A549 (cell line): ENCODE measurements at regions of chr2 and their contacts with region 1.

Region 1: DNA sequence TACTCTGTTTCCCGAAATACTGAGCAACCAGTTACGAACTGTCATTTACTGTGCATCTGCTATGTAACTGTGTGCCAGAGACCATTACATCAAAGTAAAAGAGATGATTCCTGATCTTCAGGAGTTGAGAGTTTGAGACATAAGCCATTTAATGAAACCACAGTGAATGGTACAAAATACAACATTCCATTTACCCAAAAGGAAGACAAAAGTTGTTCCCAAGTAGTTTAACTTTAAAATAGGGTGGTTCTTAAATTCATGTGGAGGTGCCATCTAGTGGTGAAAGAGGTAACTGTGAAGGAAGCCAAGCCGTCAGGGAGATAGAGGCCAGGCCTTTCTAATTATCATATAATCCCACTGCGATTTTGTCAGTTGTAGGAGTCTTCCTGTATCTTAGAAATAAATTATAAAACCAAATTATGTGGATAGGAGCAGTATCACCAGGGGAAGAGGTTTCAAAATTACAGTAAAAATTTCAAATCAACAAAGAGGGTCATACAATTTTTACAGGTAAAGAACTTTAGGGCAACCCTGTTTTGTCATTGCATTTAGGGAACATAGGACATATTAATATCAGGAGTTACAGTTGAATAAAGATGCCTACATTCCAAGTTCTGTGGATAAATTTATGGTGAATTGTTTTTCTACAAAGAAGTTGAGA is 67.7 kb downstream of the EPAS1 start:
- DNase-seq: peak; percentile 50 to 71
- ATAC-seq: peak in 1 of 2 experiments; percentile 70; a peak in 3 of 6 replicates
- H3K4me3 ChIP-seq: no peak overlapping the region
- H3K27ac ChIP-seq: peak overlapping the region in 1 of 2 experiments; percentile 60; a peak in 2 of 6 replicates
- H3K4me1 ChIP-seq: peaks cover 27% of the 10 kb centered on the region
- CTCF ChIP-seq: peak; percentile 94
- EP300 ChIP-seq: no peak
- POLR2A ChIP-seq: no peak
- RAD21 ChIP-seq: peak; percentile 94 to 96

Region 2: DNA sequence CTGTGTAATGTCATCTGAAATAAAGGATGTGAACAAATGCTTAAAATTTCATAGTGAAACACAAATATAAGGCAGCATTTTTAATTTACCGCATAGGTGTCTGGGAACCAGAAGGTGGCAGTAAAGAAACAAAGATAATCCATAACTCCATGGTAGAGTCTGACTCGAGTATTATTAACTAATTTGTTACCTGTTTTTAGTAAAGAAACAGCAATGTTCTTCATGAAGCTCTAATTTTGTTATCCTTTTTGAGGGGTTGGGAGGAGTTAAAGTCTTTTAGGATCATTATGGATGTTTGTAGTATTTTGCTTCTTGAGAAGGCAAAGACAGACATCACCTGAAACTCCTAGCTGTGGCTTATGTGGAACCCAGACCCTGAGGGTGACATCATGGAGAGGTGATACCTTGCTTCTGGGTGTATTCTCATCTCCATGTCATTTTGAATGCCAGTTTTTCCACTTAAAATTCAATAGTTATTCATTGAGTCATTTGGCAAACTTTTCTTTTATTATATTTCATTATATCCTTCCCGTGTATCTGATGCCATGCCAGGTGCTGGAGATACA is 353.9 kb before region 1 on chr2:
- CTCF ChIA-PET with region 1: interaction called, 29 read pairs
- POLR2A ChIA-PET with region 1: no interaction called
- DNase-seq: peak; percentile 62 to 72
- ATAC-seq: peak; percentile 73 to 92; a peak in 5 of 6 replicates
- H3K4me3 ChIP-seq: no peak overlapping the region
- H3K27ac ChIP-seq: peak overlapping the region; percentile 12 to 56; a peak in 4 of 6 replicates
- H3K4me1 ChIP-seq: peaks cover 19% of the 10 kb centered on the region
- CTCF ChIP-seq: peak; percentile 96
- EP300 ChIP-seq: no peak
- POLR2A ChIP-seq: no peak
- RAD21 ChIP-seq: peak; percentile 94 to 98

Region 3: GRCh38 chr2:46306330-46306751 is 58.6 kb before region 1 on chr2:
- CTCF ChIA-PET with region 1: interaction called, 14 read pairs
- POLR2A ChIA-PET with region 1: no interaction called
- DNase-seq: peak in 1 of 2 experiments; percentile 83
- ATAC-seq: peak; percentile 27 to 38; a peak in 4 of 6 replicates
- H3K4me3 ChIP-seq: no peak overlapping the region
- H3K27ac ChIP-seq: peak overlapping the region; percentile 71 to 92
- H3K4me1 ChIP-seq: peaks cover 100% of the 10 kb centered on the region
- CTCF ChIP-seq: no peak
- EP300 ChIP-seq: peak; percentile 84 to 89; a peak in 3 of 5 replicates
- POLR2A ChIP-seq: no peak
- RAD21 ChIP-seq: peak in 1 of 2 experiments; percentile 32; a peak in 1 of 5 replicates

Region 4: DNA sequence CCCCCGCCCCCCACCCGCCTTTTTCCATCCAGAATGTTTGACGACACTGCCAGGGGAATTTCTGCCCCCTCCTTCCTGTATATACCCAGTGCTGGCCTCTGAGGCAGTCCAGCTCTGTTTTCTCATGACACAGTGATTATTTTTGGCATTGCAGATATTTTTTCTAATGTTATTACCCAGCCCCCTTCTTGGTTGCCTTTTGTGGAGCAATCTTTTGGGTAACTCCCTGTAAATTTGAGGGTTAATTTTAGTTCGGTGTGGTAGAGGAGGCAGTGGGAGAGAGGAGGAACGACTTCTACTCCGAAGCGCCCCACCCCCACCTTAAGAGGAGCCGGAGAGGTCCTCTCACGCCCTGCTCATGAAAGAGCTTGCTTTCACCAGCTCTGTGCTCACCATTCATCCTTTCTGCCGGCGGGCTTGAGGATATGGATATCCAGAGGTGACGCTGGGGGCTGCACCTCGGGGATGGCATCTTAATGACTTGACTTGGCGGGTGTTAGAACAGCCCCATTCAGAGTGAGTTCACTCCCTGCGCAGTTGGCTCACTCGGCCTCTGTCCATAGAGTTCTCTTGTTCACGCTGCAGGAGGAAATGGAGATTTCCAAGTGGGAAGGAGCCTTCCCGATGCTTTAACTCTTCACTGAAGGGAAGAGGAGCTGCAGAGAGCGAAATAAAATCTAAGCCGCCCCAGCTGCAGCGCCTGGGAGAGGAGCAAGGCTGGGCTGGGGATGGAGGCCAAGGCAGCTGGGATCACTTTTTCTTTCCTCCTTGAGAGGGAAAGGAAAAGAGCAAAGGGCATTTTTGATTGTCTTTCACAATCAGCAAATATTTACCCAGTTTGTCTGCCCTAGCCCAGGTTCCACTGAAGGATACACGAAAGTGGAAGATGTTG is 29.3 kb before region 1 on chr2:
- CTCF ChIA-PET with region 1: interaction called, 17 read pairs
- POLR2A ChIA-PET with region 1: interaction called, 3 read pairs
- DNase-seq: peak; percentile 60 to 82
- ATAC-seq: peak; percentile 57 to 65
- H3K4me3 ChIP-seq: peak overlapping the region; percentile 37
- H3K27ac ChIP-seq: peak overlapping the region; percentile 88 to 89
- H3K4me1 ChIP-seq: peaks cover 98% of the 10 kb centered on the region
- CTCF ChIP-seq: no peak
- EP300 ChIP-seq: peak; percentile 59 to 70; a peak in 2 of 5 replicates
- POLR2A ChIP-seq: no peak
- RAD21 ChIP-seq: peak in 1 of 2 experiments; percentile 16; a peak in 3 of 5 replicates

Region 5: DNA sequence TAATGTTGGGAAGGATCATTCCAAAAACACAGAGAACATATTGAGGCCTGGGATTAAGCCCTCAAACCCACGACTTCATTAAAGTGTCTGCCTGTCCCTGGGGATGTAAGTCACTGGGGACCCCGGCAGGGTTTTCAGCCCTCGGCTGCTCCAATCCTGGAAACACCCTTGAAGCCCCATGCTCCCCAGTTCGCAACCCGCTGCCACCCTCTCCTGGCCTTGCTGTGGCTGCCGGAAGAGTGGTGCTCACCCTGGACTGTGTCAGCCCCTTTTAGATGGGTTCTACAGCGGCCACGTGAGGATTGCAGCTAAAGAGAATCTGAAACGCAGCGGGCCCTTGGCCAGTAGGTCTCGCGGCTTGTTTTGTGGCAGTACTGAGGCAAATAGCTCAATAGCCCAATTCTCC is 12.3 kb after region 1 on chr2:
- CTCF ChIA-PET with region 1: interaction called, 26 read pairs
- POLR2A ChIA-PET with region 1: no interaction called
- DNase-seq: peak in 1 of 2 experiments; percentile 36
- ATAC-seq: peak in 1 of 2 experiments; percentile 64; a peak in 3 of 6 replicates
- H3K4me3 ChIP-seq: no peak overlapping the region
- H3K27ac ChIP-seq: no peak overlapping the region
- H3K4me1 ChIP-seq: no peaks in the 10 kb centered on the region
- CTCF ChIP-seq: peak; percentile 28; the same call in 2 of the 3 replicates
- EP300 ChIP-seq: no peak
- POLR2A ChIP-seq: no peak
- RAD21 ChIP-seq: peak; percentile 47 to 55; a peak in 4 of 5 replicates

Region 6: DNA sequence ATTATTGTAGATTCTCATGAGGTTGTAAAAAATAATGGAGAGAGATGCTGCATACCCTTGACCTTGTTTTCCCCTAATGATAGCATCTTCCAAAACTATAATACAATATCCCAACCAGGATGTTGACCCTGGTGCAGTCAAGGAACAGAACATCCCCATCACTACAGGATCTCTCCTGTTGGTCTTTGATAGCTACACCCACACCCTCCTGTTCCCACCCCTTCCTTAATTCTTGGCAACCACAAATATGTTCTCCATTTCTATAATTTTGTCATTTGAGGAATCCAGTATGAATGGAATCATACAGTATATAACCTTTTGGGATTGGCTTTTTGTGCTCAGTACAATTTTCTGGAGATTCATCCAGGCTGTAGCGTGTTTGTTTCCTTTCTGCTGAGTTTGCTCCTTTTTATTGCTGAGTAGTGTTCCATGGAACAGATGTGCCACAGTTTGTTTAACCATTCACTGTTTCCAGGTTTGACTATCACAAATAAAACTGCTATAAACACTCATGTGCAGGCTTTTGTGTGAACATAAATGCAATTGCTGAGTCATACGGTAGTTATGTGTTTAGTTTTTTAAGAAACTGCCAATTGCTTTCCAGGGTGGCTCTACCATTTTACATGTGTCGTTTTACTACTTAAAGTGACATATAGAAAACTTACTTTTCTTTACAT is 528.5 kb after region 1 on chr2:
- CTCF ChIA-PET with region 1: no interaction called
- POLR2A ChIA-PET with region 1: no interaction called
- DNase-seq: peak in 1 of 2 experiments; percentile 30
- ATAC-seq: no peak
- H3K4me3 ChIP-seq: no peak overlapping the region
- H3K27ac ChIP-seq: peak overlapping the region in 1 of 2 experiments; percentile 36; a peak in 2 of 6 replicates
- H3K4me1 ChIP-seq: peaks cover 22% of the 10 kb centered on the region
- CTCF ChIP-seq: no peak
- EP300 ChIP-seq: no peak
- POLR2A ChIP-seq: no peak
- RAD21 ChIP-seq: no peak